CD8-positive, alpha-beta T cell (primary cell): ENCODE measurements at regions of chr3 and their contacts with region 1.

Region 1: DNA sequence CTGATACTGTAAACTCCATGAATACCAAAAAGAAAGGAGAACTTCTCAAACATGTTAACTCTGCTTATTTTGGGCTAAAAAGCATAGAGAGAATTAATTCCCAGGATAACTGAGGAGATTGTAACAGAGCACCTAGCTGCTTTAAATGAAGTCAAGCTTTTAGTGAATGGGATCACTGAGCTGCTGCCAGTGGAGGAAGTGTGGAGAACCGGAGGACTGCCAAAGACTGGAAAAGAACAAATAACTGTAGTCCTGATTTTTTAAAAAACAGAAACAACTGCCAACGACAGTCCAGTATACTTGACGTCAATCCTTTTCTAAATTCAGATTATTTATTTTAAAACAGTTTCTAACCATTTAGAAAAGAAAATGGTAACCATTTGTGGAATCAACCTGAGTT is 3.3 kb downstream of the C3orf70 start:
- DNase-seq: no peak
- ATAC-seq: no peak
- H3K4me3 ChIP-seq: no peak overlapping the region
- H3K4me3 Mint-ChIP-seq: no peak overlapping the region
- H3K27ac ChIP-seq: no peak overlapping the region
- H3K27ac Mint-ChIP-seq: no peak overlapping the region
- H3K4me1 ChIP-seq: peaks cover 6% of the 10 kb centered on the region
- H3K4me1 Mint-ChIP-seq: peaks cover 5% of the 10 kb centered on the region
- H3K27me3 ChIP-seq: peaks cover 17 to 33% of the 10 kb centered on the region in 2 experiments
- H3K27me3 Mint-ChIP-seq: peaks cover 28% of the 10 kb centered on the region
- CTCF ChIP-seq: no peak

Region 2: DNA sequence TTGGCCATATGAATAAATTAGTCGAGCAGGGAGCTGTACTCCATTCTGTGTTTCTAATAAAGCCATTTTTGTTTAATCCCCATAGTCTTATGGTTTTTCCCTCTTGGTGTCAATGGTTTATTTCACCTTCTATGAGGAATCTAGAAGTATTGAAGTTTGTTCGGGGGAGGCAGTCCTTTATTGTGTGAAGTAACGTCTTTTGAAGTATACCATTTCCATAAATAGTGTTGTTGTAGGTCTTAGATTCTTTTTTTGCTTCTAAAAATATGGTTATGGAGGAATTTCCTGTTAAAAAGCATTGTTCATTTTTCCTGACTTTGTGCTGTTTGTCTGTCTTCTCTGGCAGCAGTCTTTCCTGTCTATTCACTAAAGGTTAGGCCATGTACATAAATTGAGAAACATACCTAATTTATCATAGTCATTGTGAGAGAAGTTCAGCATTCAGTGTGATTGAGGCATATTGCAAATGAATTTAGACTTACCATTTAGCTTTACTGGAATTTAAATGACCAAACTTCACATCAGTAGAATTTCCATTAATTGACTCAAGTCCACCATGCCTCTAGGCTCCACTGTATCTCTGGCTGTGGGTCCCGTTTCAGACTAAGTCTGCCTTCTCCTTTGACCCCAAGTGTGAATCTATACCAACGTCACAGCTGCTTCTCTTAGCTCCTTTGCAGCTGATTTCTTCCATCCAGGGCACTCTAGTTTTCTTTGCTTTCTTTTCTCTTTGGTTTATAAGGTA is 1414.7 kb before region 1 on chr3:
- CTCF ChIA-PET with region 1: no interaction called
- POLR2A ChIA-PET with region 1: no interaction called
- intact Hi-C with region 1: loop called in 1 of 2 experiments (anchors 10 kb)
- DNase-seq: no peak
- ATAC-seq: no peak
- H3K4me3 ChIP-seq: no peak overlapping the region
- H3K4me3 Mint-ChIP-seq: no peak overlapping the region
- H3K27ac ChIP-seq: no peak overlapping the region
- H3K27ac Mint-ChIP-seq: no peak overlapping the region
- H3K4me1 ChIP-seq: no peaks in the 10 kb centered on the region
- H3K4me1 Mint-ChIP-seq: no peaks in the 10 kb centered on the region
- H3K27me3 ChIP-seq: no peaks in the 10 kb centered on the region
- H3K27me3 Mint-ChIP-seq: no peaks in the 10 kb centered on the region
- CTCF ChIP-seq: no peak

Region 3: DNA sequence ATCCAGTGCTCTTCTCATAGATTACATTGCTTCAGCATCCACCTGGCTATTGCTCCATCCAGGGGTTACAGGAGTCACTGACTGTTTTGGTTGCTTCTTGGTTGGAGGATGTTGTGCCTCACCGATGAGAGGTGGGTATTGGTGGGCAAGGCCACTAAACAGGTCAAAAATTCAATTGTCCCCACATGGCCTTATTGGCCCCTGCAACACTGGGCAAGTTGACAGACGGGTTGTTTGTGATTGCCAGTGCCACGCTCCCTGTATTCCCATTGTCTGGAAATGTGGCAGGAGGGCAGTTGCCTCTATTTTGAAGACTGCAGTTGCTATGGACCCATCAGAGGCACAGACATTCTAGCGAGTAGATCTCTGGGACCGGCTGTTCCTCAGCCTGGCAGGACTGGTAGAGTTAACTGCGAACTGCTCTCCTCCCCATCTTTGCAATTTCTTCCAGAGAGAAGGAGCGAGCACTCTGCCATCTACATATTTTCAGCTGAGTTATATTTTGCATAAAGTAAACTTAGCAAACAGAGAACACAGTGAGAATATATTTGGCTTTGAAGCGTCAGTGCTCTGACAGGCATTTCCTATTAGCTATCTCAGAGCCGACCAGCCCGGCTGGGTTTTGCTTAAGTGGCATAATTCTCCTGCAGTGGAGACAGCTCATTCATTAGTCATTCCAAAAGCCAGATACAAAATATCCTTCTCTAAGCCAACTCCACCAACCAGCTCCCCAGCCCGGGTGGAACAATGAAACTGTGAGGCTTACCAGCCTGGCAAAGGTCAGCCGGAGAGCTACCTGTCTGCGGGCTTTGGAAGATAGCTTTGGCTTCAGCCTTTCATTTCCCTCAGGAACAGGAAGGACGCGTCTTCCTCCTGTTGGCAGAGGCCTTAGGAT is 411.7 kb before region 1 on chr3:
- CTCF ChIA-PET with region 1: no interaction called
- POLR2A ChIA-PET with region 1: no interaction called
- intact Hi-C with region 1: no loop called
- DNase-seq: no peak
- ATAC-seq: no peak
- H3K4me3 ChIP-seq: no peak overlapping the region
- H3K4me3 Mint-ChIP-seq: no peak overlapping the region
- H3K27ac ChIP-seq: no peak overlapping the region
- H3K27ac Mint-ChIP-seq: no peak overlapping the region
- H3K4me1 ChIP-seq: no peaks in the 10 kb centered on the region
- H3K4me1 Mint-ChIP-seq: no peaks in the 10 kb centered on the region
- H3K27me3 ChIP-seq: no peaks in the 10 kb centered on the region
- H3K27me3 Mint-ChIP-seq: peaks cover 8% of the 10 kb centered on the region
- CTCF ChIP-seq: no peak

Region 4: DNA sequence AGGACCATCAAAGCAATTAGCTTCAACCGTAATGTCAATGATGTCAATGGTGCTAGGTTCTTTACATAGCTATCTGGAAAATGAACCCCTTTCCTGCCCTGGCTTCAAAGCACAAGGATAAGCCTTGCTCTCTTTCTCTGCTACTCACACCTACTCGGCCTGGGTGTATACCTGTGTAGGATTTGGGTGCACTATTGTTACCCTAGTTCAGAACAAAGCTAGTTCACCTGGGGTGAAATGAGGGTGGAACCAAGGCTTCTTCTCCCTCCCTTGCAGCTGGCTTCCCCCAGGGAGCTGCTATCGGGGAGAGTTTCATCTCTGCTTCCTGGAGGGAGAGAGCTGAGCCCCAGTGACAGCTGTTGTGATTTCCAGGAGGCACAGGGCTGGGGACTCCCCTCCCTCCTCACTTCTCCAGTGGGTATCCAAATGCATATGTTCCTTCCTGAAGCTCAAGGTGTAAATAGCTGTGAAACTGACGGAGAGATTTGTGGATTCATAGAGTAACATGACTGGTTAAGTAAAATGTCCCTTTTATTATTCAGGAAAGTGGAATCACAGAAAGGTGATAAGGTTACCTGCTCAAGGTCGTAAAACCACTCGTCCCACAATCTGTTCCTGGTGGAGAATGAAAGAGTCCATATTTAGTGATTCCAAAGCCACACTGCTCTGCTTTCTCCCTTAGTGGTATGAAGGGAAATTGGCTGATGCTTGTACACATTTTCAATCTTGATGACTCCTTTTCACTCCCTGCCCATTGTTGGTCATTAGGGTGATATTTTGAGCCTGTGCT is 15.0 kb after region 1 on chr3:
- CTCF ChIA-PET with region 1: no interaction called
- POLR2A ChIA-PET with region 1: no interaction called
- intact Hi-C with region 1: no loop called
- DNase-seq: no peak
- ATAC-seq: no peak
- H3K4me3 ChIP-seq: no peak overlapping the region
- H3K4me3 Mint-ChIP-seq: no peak overlapping the region
- H3K27ac ChIP-seq: no peak overlapping the region
- H3K27ac Mint-ChIP-seq: no peak overlapping the region
- H3K4me1 ChIP-seq: no peaks in the 10 kb centered on the region
- H3K4me1 Mint-ChIP-seq: no peaks in the 10 kb centered on the region
- H3K27me3 ChIP-seq: no peaks in the 10 kb centered on the region
- H3K27me3 Mint-ChIP-seq: peaks cover 16% of the 10 kb centered on the region
- CTCF ChIP-seq: no peak